ENCODE measurements at regions of chr16 and their contacts with region 1.

Region 1: GRCh38 chr16:53435066-53435688 is 906 bp downstream of the RBL2 start:
- DNase-seq: peak; percentile 73
- ATAC-seq: peak; percentile 93
- H3K4me3 ChIP-seq: peak overlapping the region; percentile 89
- H3K27ac ChIP-seq: peak overlapping the region; percentile 75
- H3K4me1 ChIP-seq: no peaks in the 10 kb centered on the region
- H3K27me3 ChIP-seq: no peaks in the 10 kb centered on the region
- CTCF ChIP-seq: no peak
- EP300 ChIP-seq: no peak
- POLR2A ChIP-seq: peak; percentile 69
- RAD21 ChIP-seq: no peak

Region 2: GRCh38 chr16:53449632-53450517 is 14.7 kb after region 1 on chr16:
- CTCF ChIA-PET with region 1: interaction called, 8 read pairs
- POLR2A ChIA-PET with region 1: interaction called, 4 read pairs
- RAD21 ChIA-PET with region 1: interaction called, 21 read pairs
- SMC1A ChIA-PET with region 1: interaction called, 33 read pairs
- in situ Hi-C with region 1: no loop called
- intact Hi-C with region 1: no loop called
- DNase-seq: no peak
- ATAC-seq: peak; percentile 77
- H3K4me3 ChIP-seq: no peak overlapping the region
- H3K27ac ChIP-seq: peak overlapping the region; percentile 25; the same call in 1 of the 2 replicates
- H3K4me1 ChIP-seq: no peaks in the 10 kb centered on the region
- H3K27me3 ChIP-seq: no peaks in the 10 kb centered on the region
- CTCF ChIP-seq: no peak
- EP300 ChIP-seq: no peak; a peak in 1 of 4 replicates
- POLR2A ChIP-seq: no peak
- RAD21 ChIP-seq: no peak

Region 3: GRCh38 chr16:53457670-53458069 is 22.5 kb after region 1 on chr16:
- CTCF ChIA-PET with region 1: interaction called, 13 read pairs
- POLR2A ChIA-PET with region 1: interaction called, 5 read pairs
- RAD21 ChIA-PET with region 1: interaction called, 21 read pairs
- SMC1A ChIA-PET with region 1: interaction called, 33 read pairs
- in situ Hi-C with region 1: no loop called
- intact Hi-C with region 1: no loop called
- DNase-seq: peak; percentile 92
- ATAC-seq: peak; percentile 100
- H3K4me3 ChIP-seq: no peak overlapping the region
- H3K27ac ChIP-seq: peak overlapping the region; percentile 61; the same call in 1 of the 2 replicates
- H3K4me1 ChIP-seq: peaks cover 28% of the 10 kb centered on the region
- H3K27me3 ChIP-seq: no peaks in the 10 kb centered on the region
- CTCF ChIP-seq: 0 out of 6 replicates have a peak, but pooled peaks of 1 of the 3 experiments have one; percentile 8
- EP300 ChIP-seq: peak; percentile 88 to 90
- POLR2A ChIP-seq: no peak
- RAD21 ChIP-seq: peak; percentile 31

Region 4: GRCh38 chr16:53482123-53482522 is 46.9 kb after region 1 on chr16:
- CTCF ChIA-PET with region 1: no interaction called
- POLR2A ChIA-PET with region 1: no interaction called
- RAD21 ChIA-PET with region 1: no interaction called
- SMC1A ChIA-PET with region 1: no interaction called
- in situ Hi-C with region 1: no loop called
- intact Hi-C with region 1: no loop called
- DNase-seq: no peak
- ATAC-seq: no peak
- H3K4me3 ChIP-seq: no peak overlapping the region
- H3K27ac ChIP-seq: no peak overlapping the region
- H3K4me1 ChIP-seq: no peaks in the 10 kb centered on the region
- H3K27me3 ChIP-seq: no peaks in the 10 kb centered on the region
- CTCF ChIP-seq: no peak
- EP300 ChIP-seq: no peak
- POLR2A ChIP-seq: no peak
- RAD21 ChIP-seq: no peak

Region 5: GRCh38 chr16:53494636-53495035 is 59.5 kb after region 1 on chr16:
- CTCF ChIA-PET with region 1: no interaction called
- POLR2A ChIA-PET with region 1: no interaction called
- RAD21 ChIA-PET with region 1: no interaction called
- SMC1A ChIA-PET with region 1: no interaction called
- in situ Hi-C with region 1: no loop called
- intact Hi-C with region 1: no loop called
- DNase-seq: no peak
- ATAC-seq: no peak
- H3K4me3 ChIP-seq: no peak overlapping the region
- H3K27ac ChIP-seq: no peak overlapping the region
- H3K4me1 ChIP-seq: no peaks in the 10 kb centered on the region
- H3K27me3 ChIP-seq: no peaks in the 10 kb centered on the region
- CTCF ChIP-seq: no peak
- EP300 ChIP-seq: no peak
- POLR2A ChIP-seq: no peak
- RAD21 ChIP-seq: no peak

Measured in GM12878 (cell line).